Body of pancreas (tissue), 4 donors: ENCODE measurements at regions of chr5 and their contacts with region 1.

Region 1: GRCh38 chr5:81751009-81751835 is at the start of gene SSBP2:
- DNase-seq: peak; percentile 99 to 100 (median 99)
- ATAC-seq: peak; percentile 91
- H3K4me3 ChIP-seq: peak within 1 kb of the TSS; percentile 70 to 89
- H3K27ac ChIP-seq: peak within 1 kb of the TSS; percentile 96 to 99 (median 98)
- H3K4me1 ChIP-seq: peaks cover 42% of the 10 kb centered on the region
- H3K27me3 ChIP-seq: no peaks in the 10 kb centered on the region
- CTCF ChIP-seq: peak in 3 of 7 experiments; percentile 16 to 26 (median 18)
- POLR2A ChIP-seq: peak; percentile 75 to 86 (median 83)
- total RNA-seq, gene SSBP2: 18.1 to 31.4 TPM

Region 2: GRCh38 chr5:81393783-81394718 is 357.2 kb before region 1 on chr5 and contains the start of gene ACOT12:
- intact Hi-C with region 1: no loop called
- DNase-seq: peak in 1 of 4 donors; percentile 19
- ATAC-seq: peak; percentile 33
- H3K4me3 ChIP-seq: no peak within 1 kb of the TSS
- H3K27ac ChIP-seq: no peak within 1 kb of the TSS
- H3K4me1 ChIP-seq: peaks cover 13% of the 10 kb centered on the region
- H3K27me3 ChIP-seq: peaks cover 0 to 13% of the 10 kb centered on the region in 2 donors
- CTCF ChIP-seq: no peak
- POLR2A ChIP-seq: no peak
- total RNA-seq, gene ACOT12: not detected

Region 3: DNA sequence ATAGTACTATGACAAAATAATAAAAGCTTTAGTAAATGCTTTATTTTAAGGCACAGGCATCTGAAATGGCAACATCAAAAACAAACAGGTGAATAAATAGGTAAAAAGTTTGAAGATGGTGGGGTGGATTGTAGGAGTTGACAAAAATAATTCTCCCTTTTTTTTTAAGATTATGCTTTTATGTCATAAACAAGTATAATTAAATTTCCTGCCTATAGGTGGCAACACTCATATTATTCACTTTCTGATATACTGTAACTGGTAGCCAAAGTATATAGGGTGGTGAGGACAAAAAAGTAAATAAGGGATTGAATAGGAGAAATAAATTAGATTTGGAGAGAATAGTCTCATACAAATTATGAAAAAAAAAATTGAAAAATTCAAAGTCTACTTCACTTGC is 237.2 kb before region 1 on chr5:
- intact Hi-C with region 1: loop called (anchors 5 kb)
- DNase-seq: no peak
- ATAC-seq: no peak
- H3K4me3 ChIP-seq: no peak overlapping the region
- H3K27ac ChIP-seq: no peak overlapping the region
- H3K4me1 ChIP-seq: peaks cover 3% of the 10 kb centered on the region
- H3K27me3 ChIP-seq: no peaks in the 10 kb centered on the region
- CTCF ChIP-seq: peak in 5 of 7 experiments; percentile 14 to 39 (median 23)
- POLR2A ChIP-seq: no peak

Region 4: DNA sequence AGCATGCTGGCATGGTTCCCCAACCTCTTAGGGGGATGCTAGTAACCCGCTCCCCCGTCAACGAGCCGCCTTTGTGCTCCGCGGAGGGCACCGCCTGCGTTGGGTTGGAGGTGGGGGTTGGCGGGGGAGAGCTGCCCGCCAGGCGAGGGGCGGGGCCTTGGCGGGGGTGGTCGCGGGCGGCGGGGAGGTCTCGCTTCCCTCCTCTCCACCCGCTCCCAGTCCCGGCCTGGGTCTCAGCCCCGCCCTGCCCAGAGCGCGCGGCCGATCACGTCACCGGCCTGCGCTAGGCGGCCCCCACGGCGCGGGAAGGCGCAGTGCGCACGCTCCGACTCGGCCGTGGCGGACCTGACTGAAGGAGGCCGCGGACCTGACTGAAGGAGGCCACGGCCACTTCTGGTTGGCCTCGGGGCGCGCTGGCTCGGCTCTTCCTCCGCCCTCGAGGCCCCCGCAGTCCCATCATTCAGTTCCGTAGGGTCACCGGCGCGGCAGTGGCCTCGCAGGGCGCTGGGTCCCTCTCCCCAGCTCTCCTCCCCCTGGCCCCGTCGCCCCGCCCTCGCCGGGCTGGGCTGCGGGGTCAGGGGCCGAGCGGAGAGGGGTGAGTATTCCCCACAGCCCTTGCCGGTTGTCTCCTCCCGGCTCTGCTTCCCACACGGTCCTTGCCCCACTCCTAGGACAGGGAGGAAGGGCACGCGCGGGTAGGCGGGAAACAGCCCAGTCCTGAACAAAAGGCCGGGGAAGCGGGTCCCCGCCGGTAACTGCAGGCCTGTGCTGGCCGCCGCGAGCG is 220.7 kb after region 1 on chr5 and contains the start of gene ATG10:
- intact Hi-C with region 1: no loop called
- DNase-seq: peak; percentile 89 to 93 (median 90)
- ATAC-seq: peak; percentile 97
- H3K4me3 ChIP-seq: peak within 1 kb of the TSS; percentile 25 to 41
- H3K27ac ChIP-seq: peak within 1 kb of the TSS; percentile 96 to 100 (median 98)
- H3K4me1 ChIP-seq: peaks cover 11% of the 10 kb centered on the region
- H3K27me3 ChIP-seq: no peaks in the 10 kb centered on the region
- CTCF ChIP-seq: no peak
- POLR2A ChIP-seq: peak; percentile 94 to 96 (median 95)
- total RNA-seq, gene ATG10: 2.9 to 4.6 TPM